H1 (cell line): ENCODE measurements at regions of chr16 and their contacts with region 1.

Region 1: DNA sequence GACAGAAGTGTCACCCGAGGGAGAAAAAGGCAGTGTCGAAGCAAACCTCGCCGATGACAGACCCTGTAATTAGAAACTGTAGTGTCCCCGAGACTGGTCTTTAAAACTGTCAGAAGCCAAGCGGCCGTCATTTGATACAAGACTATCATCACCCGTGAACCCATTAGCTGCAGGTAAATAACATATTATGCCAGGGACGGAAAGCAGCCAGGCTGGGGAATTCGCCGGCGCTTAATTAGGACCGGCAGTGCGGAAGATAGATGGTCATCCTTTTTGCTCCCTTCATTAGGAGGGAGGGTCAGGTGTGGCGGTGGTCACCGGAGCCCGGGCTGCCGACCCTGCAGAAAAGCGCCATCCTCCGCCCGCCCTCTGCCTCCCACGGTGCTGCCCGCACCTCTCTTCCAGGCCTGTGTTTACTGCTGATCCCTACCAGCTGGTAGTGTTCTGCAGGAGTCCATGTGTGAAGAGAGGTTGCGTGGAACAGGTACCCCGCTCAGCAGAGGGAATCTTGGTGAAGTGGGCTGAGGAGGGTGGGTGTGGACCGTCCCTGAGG is 109.4 kb upstream of the GSE1 start:
- DNase-seq: no peak
- H3K4me3 ChIP-seq: no peak overlapping the region
- H3K27ac ChIP-seq: no peak overlapping the region
- H3K4me1 ChIP-seq: peaks cover 2 to 14% (median 11%) of the 10 kb centered on the region in 4 experiments; a peak in 6 of 7 replicates
- H3K27me3 ChIP-seq: no peaks in the 10 kb centered on the region; a peak in 1 of 7 replicates
- CTCF ChIP-seq: no peak
- EP300 ChIP-seq: no peak
- POLR2A ChIP-seq: no peak
- RAD21 ChIP-seq: no peak

Region 2: GRCh38 chr16:85330694-85331188 is 173.0 kb before region 1 on chr16:
- CTCF ChIA-PET with region 1: no interaction called
- POLR2A ChIA-PET with region 1: no interaction called
- DNase-seq: no peak
- H3K4me3 ChIP-seq: peak overlapping the region in 2 of 4 experiments; percentile 32 to 36; a peak in 3 of 8 replicates
- H3K27ac ChIP-seq: no peak overlapping the region
- H3K4me1 ChIP-seq: peaks cover 4 to 51% (median 42%) of the 10 kb centered on the region in 4 experiments
- H3K27me3 ChIP-seq: peaks cover 26 to 56% (median 47%) of the 10 kb centered on the region in 4 experiments
- CTCF ChIP-seq: peak in 2 of 3 experiments; percentile 59 to 74; a peak in 3 of 4 replicates
- EP300 ChIP-seq: no peak
- POLR2A ChIP-seq: no peak
- RAD21 ChIP-seq: peak; percentile 24 to 40

Region 3: GRCh38 chr16:85360323-85361277 is 143.2 kb before region 1 on chr16:
- CTCF ChIA-PET with region 1: no interaction called
- POLR2A ChIA-PET with region 1: no interaction called
- DNase-seq: no peak
- H3K4me3 ChIP-seq: no peak overlapping the region
- H3K27ac ChIP-seq: no peak overlapping the region; the same call in 1 of the 2 replicates
- H3K4me1 ChIP-seq: peaks cover 5 to 9% (median 7%) of the 10 kb centered on the region in 4 experiments
- H3K27me3 ChIP-seq: peaks cover 0 to 6% (median 2%) of the 10 kb centered on the region in 4 experiments; a peak in 3 of 7 replicates
- CTCF ChIP-seq: no peak
- EP300 ChIP-seq: no peak
- POLR2A ChIP-seq: no peak
- RAD21 ChIP-seq: no peak

Region 4: DNA sequence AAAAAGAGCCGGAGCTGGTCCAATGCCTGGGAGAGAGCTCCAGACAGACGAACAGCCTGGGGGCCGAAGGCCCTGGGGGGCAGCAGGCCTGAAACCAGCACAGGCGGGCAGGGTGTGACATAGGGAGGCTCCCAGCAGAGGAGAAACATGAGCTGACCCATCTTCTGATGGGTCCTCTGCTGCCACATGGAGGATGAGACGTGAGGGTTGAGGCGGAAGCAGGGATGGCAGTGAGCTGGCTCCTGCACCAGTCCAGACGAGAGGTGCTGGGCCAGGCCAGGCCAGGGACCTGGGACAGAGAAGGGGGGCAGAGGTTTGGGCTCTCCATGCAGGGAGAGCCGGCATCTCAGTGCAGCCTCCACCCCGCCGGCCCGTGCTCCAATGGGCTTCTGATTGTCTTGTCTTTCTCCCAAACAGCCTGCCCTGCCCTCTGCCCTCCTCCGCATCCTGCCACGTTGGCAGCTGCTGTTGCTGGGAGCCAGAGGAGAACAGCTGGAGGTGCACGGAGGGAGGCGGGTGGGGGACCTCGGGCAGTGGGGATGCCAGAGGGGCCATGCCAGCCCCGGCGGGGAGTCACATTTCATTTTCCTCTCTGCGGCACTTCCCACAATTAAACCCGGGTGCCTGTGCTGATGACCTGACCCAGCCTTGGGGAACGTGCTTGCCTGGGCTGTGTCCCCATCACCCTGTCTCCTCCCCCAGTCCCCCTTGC is 29.7 kb before region 1 on chr16:
- CTCF ChIA-PET with region 1: interaction called, 10 read pairs
- POLR2A ChIA-PET with region 1: no interaction called
- DNase-seq: peak in 1 of 2 experiments; percentile 57
- H3K4me3 ChIP-seq: no peak overlapping the region
- H3K27ac ChIP-seq: no peak overlapping the region
- H3K4me1 ChIP-seq: peaks cover 4 to 23% (median 13%) of the 10 kb centered on the region in 4 experiments
- H3K27me3 ChIP-seq: no peaks in the 10 kb centered on the region; a peak in 1 of 7 replicates
- CTCF ChIP-seq: peak in 1 of 3 experiments; percentile 16; a peak in 1 of 4 replicates
- EP300 ChIP-seq: no peak
- POLR2A ChIP-seq: no peak
- RAD21 ChIP-seq: peak in 1 of 2 experiments; percentile 20; a peak in 2 of 4 replicates

Region 5: GRCh38 chr16:85514595-85515318 is 11.0 kb after region 1 on chr16:
- CTCF ChIA-PET with region 1: interaction called, 14 read pairs
- POLR2A ChIA-PET with region 1: interaction called, 5 read pairs
- DNase-seq: no peak
- H3K4me3 ChIP-seq: no peak overlapping the region
- H3K27ac ChIP-seq: no peak overlapping the region
- H3K4me1 ChIP-seq: peaks cover 0 to 20% (median 14%) of the 10 kb centered on the region in 4 experiments; a peak in 6 of 7 replicates
- H3K27me3 ChIP-seq: no peaks in the 10 kb centered on the region; a peak in 1 of 7 replicates
- CTCF ChIP-seq: no peak
- EP300 ChIP-seq: no peak
- POLR2A ChIP-seq: no peak
- RAD21 ChIP-seq: no peak